ENCODE measurements at regions of chr5 and their contacts with region 1.

Region 1: DNA sequence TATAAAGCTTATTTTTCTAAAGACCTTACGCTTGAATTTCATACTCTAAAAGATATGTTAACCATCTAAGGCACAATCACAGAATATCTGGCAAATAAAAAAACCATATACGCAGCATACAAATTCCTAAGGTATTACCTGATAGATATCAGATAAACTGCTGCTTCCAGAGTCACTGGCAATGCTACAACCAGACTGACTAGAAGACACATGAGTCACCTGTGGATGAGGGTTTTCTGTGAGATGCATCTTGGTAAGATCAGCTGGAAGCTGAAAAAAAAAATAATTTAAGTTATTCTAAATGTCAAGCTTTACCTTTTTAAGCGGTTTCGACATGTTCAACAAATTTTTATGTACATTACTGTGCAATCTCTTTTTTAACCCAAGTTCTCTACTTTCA is 113.8 kb downstream of the RAPGEF6 start:
- DNase-seq: no peak
- CTCF ChIP-seq: no peak

Region 2: GRCh38 chr5:131505237-131505908 is 15.9 kb before region 1 on chr5:
- CTCF ChIA-PET with region 1: interaction called, 11 read pairs
- POLR2A ChIA-PET with region 1: no interaction called
- DNase-seq: no peak
- CTCF ChIP-seq: no peak

Measured in GM10248 (cell line).